Left cardiac atrium (tissue), 4 donors: ENCODE measurements at regions of chr2 and their contacts with region 1.

Region 1: DNA sequence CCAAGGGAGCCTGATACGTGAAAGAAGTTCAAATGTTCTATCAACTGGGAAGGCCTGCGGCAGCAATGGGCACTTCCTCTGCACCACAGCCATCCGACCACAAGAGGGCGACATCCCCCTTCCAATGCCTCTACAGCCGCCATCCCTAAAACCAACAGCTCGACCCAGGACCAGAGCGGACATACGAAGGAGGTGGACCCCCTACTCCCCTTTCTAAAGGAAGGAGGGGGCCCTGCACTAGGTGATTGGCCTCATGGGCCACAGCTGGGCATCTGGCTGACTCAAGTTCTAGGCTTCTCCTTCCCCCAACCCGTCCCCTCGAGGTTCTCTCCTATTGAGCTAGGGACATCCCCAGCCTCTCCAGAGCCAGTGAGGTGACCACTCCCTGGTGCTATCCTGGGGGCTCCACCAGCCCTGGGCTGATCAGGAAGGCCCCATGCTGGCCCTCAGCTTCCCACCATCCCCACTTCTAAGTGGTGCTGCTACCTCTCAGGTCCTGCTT is 217.2 kb downstream of the TNS1 start:
- DNase-seq: peak; percentile 81
- ATAC-seq: peak; percentile 72 to 73

Region 2: DNA sequence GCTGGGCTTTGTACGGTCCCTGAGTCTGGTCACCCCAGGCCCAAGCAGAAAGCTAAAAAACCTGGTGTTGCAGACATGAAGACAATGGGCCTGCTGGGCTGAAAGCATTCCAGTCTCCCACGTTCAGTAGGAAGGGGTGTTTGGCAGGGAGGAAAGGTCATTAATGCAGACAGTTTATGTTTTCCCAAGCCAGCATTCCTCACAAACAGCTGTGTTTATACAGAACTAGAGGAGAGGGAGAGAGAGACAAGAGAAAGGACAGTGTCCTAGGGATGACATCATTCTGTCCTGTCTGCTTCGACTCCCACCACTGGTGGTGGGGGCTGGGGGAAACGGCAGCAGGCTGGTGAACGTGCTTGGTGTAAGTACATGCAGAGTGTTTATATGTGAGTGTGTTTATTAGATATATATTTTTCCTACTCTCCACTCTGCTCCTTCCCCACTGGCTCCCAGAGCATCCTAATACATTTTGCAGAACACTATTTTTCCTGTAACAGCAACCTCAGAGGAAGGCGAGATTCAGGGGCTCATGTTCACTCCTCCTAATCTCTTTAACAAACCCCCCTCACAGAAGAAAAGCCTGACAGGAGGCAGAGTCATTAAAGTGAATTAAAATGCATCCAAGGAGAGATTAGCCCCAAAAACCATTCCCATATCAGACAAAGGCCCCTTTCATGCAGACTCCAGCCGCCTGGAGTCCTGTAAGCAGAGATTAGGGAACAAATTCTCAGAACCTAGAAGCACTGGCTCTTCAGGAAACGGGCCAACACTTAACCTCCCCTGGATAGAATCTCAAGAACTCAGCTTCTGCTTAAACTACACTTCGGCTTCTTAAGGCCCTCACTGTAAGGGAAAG is 163.2 kb before region 1 on chr2:
- intact Hi-C with region 1: no loop called
- DNase-seq: no peak
- ATAC-seq: peak; percentile 50 to 90

Region 3: DNA sequence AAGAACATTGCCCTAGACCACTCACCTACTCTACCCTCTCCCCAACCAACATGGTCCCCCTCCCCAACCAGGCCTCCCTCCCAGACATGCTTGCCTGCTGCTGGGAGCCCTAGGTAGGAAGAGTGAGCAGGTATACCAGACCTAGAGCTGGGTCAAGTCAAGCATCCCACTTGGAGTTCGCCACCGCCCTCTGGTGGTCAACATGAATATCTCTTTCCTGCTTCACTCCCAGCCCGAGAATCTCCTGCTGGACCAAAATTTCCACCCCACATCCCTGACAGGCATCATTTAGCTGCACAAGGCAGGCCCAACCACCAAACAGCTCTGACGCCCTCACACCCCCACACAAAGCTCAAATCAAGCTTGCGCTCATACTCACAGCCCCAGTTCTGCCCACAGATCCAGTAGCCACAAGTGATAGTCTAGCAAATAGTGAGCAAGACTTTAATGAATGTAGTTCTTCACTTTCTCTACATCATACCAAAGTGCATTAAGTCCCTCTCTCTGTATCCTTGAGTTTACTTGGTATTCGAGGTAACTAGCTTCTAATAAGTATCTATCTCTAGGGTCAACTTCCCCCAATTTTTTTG is 101.2 kb after region 1 on chr2:
- intact Hi-C with region 1: loop called (anchors 2 to 5 kb)
- DNase-seq: peak; percentile 81
- ATAC-seq: peak; percentile 30 to 33

Region 4: DNA sequence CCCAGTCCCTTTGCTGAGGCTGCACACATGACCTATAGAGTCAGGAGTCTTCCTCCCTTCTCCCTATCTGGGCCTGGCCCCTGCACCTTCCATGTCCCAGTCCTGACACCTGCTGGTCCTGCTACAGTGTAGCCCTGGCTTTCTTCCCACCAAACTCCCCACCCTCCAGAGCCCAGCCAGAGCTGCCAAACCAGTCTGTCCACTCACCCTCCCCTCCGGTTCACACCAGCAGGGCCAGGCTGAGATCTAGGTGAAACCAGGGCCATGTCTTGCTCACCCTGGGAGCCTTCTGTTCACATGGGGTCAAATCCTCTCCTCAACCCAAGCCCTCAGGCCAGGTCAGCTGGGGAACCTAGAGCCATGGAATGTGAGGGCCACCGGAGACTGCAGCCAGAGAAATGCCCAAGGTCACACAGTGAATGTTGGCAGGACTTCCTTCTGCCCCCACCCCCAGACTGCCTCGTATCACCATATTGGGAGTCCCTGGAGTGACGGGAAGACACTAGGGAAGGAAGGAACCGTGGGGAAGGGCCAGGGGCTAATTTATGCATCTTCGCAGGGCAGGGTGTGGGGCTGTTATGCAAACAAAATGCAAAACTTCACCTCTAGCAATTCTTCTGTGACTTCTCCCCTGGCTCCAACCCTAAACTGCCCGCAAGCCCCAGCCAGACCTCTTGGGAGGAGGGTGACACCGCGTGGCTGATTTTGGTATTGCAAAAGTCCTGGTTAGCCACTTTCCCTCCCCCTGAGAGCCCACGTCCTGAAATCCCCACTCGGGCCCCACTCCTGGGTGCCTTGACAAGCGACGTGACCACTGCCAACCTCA is 202.6 kb after region 1 on chr2:
- intact Hi-C with region 1: loop called (anchors 2 to 5 kb)
- DNase-seq: peak; percentile 87
- ATAC-seq: peak; percentile 84

Region 5: GRCh38 chr2:217993817-217994463 is 208.3 kb after region 1 on chr2:
- intact Hi-C with region 1: loop called (anchors 2 to 5 kb)
- DNase-seq: peak; percentile 71
- ATAC-seq: peak in 1 of 2 donors; percentile 42

Region 6: DNA sequence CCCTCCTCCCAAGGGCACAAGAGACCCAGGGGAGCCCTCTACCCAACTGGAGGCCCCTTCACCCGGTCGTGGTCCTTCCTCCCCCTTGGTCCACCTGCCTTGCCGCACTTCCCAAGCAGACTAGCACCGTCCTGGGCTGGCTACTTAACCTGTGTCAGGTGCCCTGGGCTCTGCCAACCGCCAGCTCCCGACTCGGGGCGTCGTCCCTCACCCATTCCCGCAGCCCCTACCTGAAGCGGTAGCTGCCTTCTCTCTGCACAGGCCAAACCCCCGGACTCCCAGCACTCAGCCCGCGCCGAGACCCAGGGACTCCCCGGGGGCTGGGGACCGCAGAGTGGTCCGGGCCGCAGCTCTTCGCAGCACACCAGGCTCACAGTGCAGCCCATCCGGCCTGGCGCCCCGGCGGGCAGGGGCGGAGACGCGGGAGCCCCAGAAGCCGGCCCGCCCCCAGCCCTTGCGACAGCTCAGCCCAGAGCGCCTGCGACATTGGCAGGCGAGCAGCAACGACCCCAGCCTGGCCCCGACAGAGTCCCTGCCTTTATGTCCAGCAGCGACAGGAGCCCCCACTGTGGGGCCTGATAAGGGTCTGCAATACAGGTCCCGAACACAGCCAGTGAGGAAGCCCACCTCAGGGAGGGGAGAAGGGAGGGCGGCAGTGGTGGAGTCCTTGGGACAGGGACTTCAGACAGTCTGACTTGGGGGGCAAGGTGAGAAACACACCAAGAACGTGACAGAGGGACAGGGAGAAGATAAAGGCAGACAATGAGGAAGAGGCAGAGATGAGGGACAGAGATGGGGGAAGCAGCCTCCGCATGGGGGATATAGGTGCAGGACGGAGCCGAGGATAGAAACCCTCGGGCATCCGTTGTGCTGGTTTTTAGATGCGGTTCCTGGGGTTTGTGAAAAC is 248.2 kb after region 1 on chr2:
- intact Hi-C with region 1: loop called in 1 of 2 experiments (anchors 2 kb)
- DNase-seq: no peak
- ATAC-seq: peak; percentile 5 to 20

Region 7: DNA sequence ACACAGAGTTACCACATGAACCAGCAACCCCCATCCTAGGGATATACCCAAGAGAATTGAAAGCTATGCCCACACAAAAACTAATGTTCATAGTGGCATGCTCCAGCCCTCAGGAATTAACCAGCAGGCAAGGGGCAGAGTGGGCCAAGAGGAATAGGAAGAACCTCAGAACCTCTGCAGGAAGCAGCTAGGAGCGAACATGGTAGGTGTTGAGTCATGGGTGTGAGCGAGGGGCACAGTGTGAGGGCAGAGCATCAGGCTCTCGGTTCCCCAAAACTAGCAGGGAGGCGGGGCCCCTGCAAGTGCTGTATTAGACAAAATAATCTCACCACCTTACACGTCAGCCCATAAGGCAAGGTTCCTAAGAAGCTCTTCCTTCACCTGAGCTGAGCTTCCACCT is 277.9 kb after region 1 on chr2:
- intact Hi-C with region 1: loop called in 1 of 2 experiments (anchors 10 kb)
- DNase-seq: no peak
- ATAC-seq: peak in 1 of 2 donors; percentile 21